ENCODE measurements at regions of chr3 and their contacts with region 1.

Region 1: GRCh38 chr3:27712136-27713077 is 9.7 kb downstream of the EOMES start:
- DNase-seq: peak; percentile 33 to 53
- ATAC-seq: peak; percentile 80 to 90
- H3K4me3 ChIP-seq: peak overlapping the region; percentile 56 to 66 (median 60)
- H3K27ac ChIP-seq: no peak overlapping the region
- H3K4me1 ChIP-seq: peaks cover 10 to 23% of the 10 kb centered on the region in 2 donors
- H3K27me3 ChIP-seq: peaks cover 49 to 62% (median 51%) of the 10 kb centered on the region in 3 donors
- CTCF ChIP-seq: peak; percentile 44 to 79 (median 62)
- POLR2A ChIP-seq: no peak

Region 2: GRCh38 chr3:28268989-28269388 is 556.6 kb after region 1 on chr3:
- in situ Hi-C with region 1: loop called in 1 of 4 experiments (anchors 25 kb)
- intact Hi-C with region 1: no loop called
- DNase-seq: no peak
- ATAC-seq: no peak
- H3K4me3 ChIP-seq: no peak overlapping the region
- H3K27ac ChIP-seq: no peak overlapping the region
- H3K4me1 ChIP-seq: peaks cover 0 to 6% of the 10 kb centered on the region in 2 donors
- H3K27me3 ChIP-seq: no peaks in the 10 kb centered on the region
- CTCF ChIP-seq: no peak
- POLR2A ChIP-seq: no peak

Region 3: DNA sequence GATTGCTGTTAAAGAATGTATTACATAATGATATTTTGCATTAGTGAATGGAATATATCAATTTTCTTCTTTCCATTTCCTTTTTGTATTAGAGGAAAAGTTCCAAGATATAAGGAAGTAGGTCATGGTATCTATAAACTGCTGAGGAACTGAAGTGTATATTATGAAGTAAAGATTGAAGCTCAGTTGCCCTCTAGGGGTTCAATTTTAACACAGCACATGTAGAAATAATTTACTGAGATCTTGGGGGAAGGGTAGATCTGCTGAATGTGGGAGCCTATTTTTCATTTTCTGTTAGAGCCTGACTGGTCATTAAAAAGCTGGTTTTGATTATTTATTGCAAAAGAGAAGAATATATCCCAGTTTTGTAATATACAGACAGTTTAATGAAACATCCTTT is 574.2 kb after region 1 on chr3:
- in situ Hi-C with region 1: no loop called
- intact Hi-C with region 1: loop called (anchors 2 kb)
- DNase-seq: no peak
- ATAC-seq: peak; percentile 62 to 66
- H3K4me3 ChIP-seq: no peak overlapping the region
- H3K27ac ChIP-seq: no peak overlapping the region
- H3K4me1 ChIP-seq: peaks cover 0 to 3% of the 10 kb centered on the region in 2 donors
- H3K27me3 ChIP-seq: no peaks in the 10 kb centered on the region
- CTCF ChIP-seq: peak in 4 of 5 experiments; percentile 31 to 52 (median 38)
- POLR2A ChIP-seq: no peak

Region 4: DNA sequence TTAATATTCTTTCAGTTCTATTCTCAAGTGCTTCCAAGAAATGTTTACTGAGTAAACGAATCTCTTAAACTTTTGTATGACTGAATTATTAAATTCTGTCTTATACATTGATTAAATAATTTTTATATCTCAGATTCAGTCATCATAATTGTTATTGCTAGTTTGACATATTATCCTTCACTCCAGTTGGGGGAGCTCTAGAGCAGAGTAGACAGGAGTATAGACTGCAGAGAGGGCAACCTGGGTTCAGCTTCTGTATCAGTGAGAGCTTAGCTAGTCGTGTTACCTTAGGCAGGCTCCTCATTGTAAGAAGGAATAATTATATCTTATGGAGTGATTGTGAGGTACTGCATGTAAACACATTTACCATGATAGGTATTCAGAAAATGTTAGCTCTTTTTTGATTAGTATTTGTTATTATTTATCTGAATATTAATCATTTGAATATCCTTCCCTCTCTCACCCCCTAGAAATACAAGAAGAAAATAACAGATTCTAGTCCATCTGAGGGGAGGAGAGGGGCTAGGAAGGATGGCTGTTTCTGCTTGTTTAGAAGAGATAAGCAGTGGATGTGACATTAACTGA is 605.1 kb after region 1 on chr3:
- in situ Hi-C with region 1: loop called in 3 of 4 experiments (anchors 10 to 25 kb)
- intact Hi-C with region 1: no loop called
- DNase-seq: no peak
- ATAC-seq: peak in 1 of 2 donors; percentile 75
- H3K4me3 ChIP-seq: no peak overlapping the region
- H3K27ac ChIP-seq: no peak overlapping the region
- H3K4me1 ChIP-seq: no peaks in the 10 kb centered on the region
- H3K27me3 ChIP-seq: no peaks in the 10 kb centered on the region
- CTCF ChIP-seq: peak in 4 of 5 experiments; percentile 25 to 62 (median 32)
- POLR2A ChIP-seq: no peak

Region 5: GRCh38 chr3:28328188-28329151 is 616.1 kb after region 1 on chr3:
- in situ Hi-C with region 1: loop called in 2 of 4 experiments (anchors 10 to 25 kb)
- intact Hi-C with region 1: loop called (anchors 5 kb)
- DNase-seq: no peak
- ATAC-seq: no peak
- H3K4me3 ChIP-seq: no peak overlapping the region
- H3K27ac ChIP-seq: no peak overlapping the region
- H3K4me1 ChIP-seq: peaks cover 0 to 7% of the 10 kb centered on the region in 2 donors
- H3K27me3 ChIP-seq: no peaks in the 10 kb centered on the region
- CTCF ChIP-seq: peak; percentile 25 to 75 (median 68)
- POLR2A ChIP-seq: no peak

Measured in gastrocnemius medialis (tissue), 4 donors.